Tibial artery (tissue), 4 donors: ENCODE measurements at regions of chr22 and their contacts with region 1.

Region 1: DNA sequence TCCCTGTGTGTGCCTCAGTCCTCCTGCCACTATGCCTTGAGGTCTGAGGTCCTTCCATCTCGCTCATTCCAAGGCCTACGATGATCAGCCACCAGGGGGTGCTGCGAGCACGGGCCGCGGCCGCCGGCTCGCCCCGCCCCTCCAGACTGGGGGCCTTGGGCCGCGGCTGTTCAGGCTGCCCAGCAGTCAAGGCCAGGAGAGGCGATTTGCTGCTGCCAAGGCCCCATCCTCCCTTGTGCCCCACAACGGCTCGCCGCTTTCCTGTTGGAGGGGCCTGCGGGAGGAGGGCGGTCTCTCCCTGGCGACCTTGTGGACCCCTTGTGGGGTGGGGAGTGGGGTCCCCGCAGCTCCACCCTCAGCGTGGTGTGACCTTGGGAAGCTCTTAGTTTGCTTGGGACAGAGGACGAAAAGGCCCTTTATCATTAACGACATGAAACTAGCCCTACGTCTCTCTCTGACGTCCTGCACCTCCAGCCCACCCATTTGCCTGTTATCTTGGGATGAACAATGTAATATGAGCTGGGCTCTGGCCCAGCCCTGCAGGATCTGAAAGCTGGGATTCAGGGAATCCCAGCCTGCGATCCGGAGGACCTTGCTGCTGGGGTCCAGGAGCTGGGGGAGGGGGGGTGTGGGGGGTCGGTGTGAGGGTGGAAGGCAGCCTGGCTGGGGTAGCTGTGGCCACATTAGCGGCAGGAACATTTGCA is 5.3 kb upstream of the GALR3 start:
- DNase-seq: peak; percentile 82 to 90
- H3K4me3 ChIP-seq: peak overlapping the region; percentile 40 to 51
- H3K27ac ChIP-seq: peak overlapping the region in 1 of 2 donors; percentile 31
- H3K4me1 ChIP-seq: peaks cover 0 to 19% (median 16%) of the 10 kb centered on the region in 4 donors
- H3K27me3 ChIP-seq: peaks cover 0 to 25% of the 10 kb centered on the region in 2 donors
- CTCF ChIP-seq: peak; percentile 96 to 97

Region 2: GRCh38 chr22:37865510-37865909 is 47.7 kb after region 1 on chr22:
- intact Hi-C with region 1: loop called (anchors 2 kb)
- DNase-seq: no peak
- H3K4me3 ChIP-seq: no peak overlapping the region
- H3K27ac ChIP-seq: no peak overlapping the region
- H3K4me1 ChIP-seq: peaks cover 0 to 23% (median 5%) of the 10 kb centered on the region in 4 donors
- H3K27me3 ChIP-seq: no peaks in the 10 kb centered on the region
- CTCF ChIP-seq: no peak

Region 3: DNA sequence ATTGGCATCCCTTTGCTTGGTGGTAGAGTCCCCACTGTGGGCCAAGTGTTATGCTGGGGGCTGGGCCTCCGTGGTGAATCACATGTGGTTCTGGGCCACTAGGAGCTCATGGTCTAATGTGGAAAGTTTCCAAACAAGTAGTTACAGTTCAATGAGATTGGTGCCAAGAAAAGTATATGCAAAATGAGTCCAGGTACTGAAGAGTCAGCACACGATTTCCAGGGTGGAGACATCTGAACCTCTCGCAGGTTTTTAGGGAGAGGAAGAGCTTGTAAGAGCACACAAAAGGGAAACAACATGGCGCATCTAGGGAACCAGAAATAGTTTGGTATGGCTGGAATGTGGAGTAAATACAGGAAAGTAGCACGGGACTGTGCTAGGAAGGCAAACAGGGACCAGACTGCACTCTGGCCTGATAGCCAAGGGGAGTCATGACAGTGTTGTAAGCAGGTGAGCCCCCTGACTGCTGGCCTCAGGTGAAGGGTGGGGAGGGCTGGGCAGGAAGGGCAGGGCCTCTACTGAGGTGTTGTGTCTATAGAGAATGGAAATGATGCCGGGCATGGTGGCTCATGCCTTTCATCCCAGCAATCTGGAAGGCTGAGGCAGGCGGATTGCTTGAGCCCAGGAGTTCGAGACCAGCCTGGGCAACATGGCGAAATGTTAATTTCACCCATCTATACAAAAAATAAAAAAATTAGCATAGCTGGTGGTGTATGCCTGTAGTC is 148.2 kb after region 1 on chr22:
- intact Hi-C with region 1: loop called (anchors 5 kb)
- DNase-seq: no peak
- H3K4me3 ChIP-seq: no peak overlapping the region
- H3K27ac ChIP-seq: no peak overlapping the region
- H3K4me1 ChIP-seq: peaks cover 0 to 22% (median 13%) of the 10 kb centered on the region in 4 donors
- H3K27me3 ChIP-seq: no peaks in the 10 kb centered on the region
- CTCF ChIP-seq: no peak